ENCODE measurements at regions of chr11 and their contacts with region 1.

Region 1: GRCh38 chr11:118689851-118690552 is 10.6 kb upstream of the TREH start:
- DNase-seq: peak; percentile 97
- H3K4me3 Mint-ChIP-seq: peak overlapping the region; percentile 25
- H3K27ac Mint-ChIP-seq: peak overlapping the region; percentile 67
- H3K4me1 Mint-ChIP-seq: peaks cover 23% of the 10 kb centered on the region
- H3K27me3 Mint-ChIP-seq: no peaks in the 10 kb centered on the region
- CTCF ChIP-seq: peak; percentile 85

Region 2: DNA sequence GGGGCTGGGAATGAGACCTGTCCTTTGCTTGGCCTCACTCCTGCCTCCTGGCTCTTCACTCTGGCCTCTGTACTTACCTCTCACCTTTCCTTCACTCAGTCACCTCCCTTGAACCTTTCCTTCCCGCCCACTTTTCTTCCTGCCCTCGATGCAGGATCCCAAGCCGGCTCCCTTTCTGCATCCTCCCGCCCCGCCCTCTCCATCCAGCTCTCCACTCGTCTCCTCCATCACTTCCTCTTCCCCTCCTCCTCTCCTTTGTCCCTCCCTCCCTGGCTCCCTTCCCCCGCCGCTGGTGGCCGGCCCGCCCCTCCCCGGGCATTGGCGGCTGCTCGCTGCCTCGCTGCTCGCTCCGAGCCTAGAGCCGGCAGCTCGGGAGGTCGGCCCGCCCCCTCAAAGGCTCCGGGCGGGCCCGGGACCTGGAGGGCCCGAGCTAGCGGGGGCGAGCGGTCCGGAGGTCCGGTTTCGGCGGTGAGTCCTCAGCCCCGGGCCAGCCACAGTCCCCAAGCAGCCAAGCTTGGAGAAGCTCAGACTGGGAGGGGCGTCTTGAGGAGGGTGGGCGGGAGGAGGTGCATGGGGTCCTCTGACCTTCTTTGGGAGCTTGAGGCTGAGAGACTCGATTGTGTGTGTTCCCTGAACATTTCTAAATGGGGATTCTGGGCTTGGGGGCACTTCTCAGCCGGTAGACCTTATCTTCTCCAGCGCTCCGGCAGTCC is 68.8 kb before region 1 on chr11:
- CTCF ChIA-PET with region 1: interaction called, 4 read pairs
- POLR2A ChIA-PET with region 1: interaction called, 12 read pairs
- intact Hi-C with region 1: no loop called
- DNase-seq: peak; percentile 89
- H3K4me3 Mint-ChIP-seq: peak overlapping the region; percentile 71
- H3K27ac Mint-ChIP-seq: peak overlapping the region; percentile 38
- H3K4me1 Mint-ChIP-seq: peaks cover 73% of the 10 kb centered on the region
- H3K27me3 Mint-ChIP-seq: no peaks in the 10 kb centered on the region
- CTCF ChIP-seq: no peak

Region 3: DNA sequence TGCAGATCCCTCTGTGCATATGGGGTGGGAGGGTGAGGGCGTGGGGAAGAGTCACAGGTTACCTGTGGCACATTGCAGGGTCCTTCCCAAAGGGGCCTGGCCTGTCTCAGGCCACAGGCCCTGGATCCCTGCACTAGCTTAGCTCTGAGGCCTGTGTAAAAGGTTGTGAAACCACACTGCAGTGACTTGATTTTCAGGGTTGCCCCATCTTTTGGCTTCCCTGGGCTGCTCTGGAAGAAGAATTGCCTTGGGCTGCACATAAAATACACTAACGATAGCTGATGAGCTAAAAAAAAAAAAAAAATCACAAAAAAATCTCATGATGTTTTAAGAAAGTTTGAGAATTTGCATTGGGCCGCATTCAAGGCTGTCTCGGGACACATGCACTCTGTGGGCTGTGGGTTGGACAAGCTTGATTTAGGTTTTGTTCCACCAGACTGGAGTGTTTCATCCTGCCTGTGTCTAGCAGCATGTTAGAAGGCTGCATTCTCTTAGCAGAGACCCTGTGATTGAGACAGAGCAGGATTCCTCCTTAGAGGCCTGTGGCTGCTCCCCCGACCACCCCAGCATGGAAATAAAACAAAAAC is 25.3 kb after region 1 on chr11:
- CTCF ChIA-PET with region 1: interaction called, 6 read pairs
- POLR2A ChIA-PET with region 1: interaction called, 11 read pairs
- intact Hi-C with region 1: no loop called
- DNase-seq: peak; percentile 25
- H3K4me3 Mint-ChIP-seq: no peak overlapping the region
- H3K27ac Mint-ChIP-seq: no peak overlapping the region
- H3K4me1 Mint-ChIP-seq: peaks cover 30% of the 10 kb centered on the region
- H3K27me3 Mint-ChIP-seq: no peaks in the 10 kb centered on the region
- CTCF ChIP-seq: no peak

Region 4: GRCh38 chr11:118907051-118908042 is 217.3 kb after region 1 on chr11:
- CTCF ChIA-PET with region 1: interaction called, 13 read pairs
- POLR2A ChIA-PET with region 1: interaction called, 21 read pairs
- intact Hi-C with region 1: loop called (anchors 1 kb)
- DNase-seq: peak; percentile 85
- H3K4me3 Mint-ChIP-seq: peak overlapping the region; percentile 33
- H3K27ac Mint-ChIP-seq: no peak overlapping the region
- H3K4me1 Mint-ChIP-seq: peaks cover 47% of the 10 kb centered on the region
- H3K27me3 Mint-ChIP-seq: no peaks in the 10 kb centered on the region
- CTCF ChIP-seq: peak; percentile 94

Region 5: GRCh38 chr11:118956094-118956846 is 266.3 kb after region 1 on chr11 and contains the start of gene UPK2:
- CTCF ChIA-PET with region 1: interaction called, 6 read pairs
- POLR2A ChIA-PET with region 1: interaction called, 3 read pairs
- intact Hi-C with region 1: loop called (anchors 1 kb)
- DNase-seq: peak; percentile 84
- H3K4me3 Mint-ChIP-seq: no peak within 1 kb of the TSS
- H3K27ac Mint-ChIP-seq: peak within 1 kb of the TSS; percentile 47
- H3K4me1 Mint-ChIP-seq: peaks cover 8% of the 10 kb centered on the region
- H3K27me3 Mint-ChIP-seq: peaks cover 12% of the 10 kb centered on the region
- CTCF ChIP-seq: peak; percentile 89
- total RNA-seq, gene UPK2: not detected in 2 replicates

Measured in MCF 10A (cell line).